Activated CD4-positive, alpha-beta T cell treated with anti-CD3 and anti-CD28 coated beads for 36 hours (primary cell): ENCODE measurements at regions of chr17 and their contacts with region 1.

Region 1: DNA sequence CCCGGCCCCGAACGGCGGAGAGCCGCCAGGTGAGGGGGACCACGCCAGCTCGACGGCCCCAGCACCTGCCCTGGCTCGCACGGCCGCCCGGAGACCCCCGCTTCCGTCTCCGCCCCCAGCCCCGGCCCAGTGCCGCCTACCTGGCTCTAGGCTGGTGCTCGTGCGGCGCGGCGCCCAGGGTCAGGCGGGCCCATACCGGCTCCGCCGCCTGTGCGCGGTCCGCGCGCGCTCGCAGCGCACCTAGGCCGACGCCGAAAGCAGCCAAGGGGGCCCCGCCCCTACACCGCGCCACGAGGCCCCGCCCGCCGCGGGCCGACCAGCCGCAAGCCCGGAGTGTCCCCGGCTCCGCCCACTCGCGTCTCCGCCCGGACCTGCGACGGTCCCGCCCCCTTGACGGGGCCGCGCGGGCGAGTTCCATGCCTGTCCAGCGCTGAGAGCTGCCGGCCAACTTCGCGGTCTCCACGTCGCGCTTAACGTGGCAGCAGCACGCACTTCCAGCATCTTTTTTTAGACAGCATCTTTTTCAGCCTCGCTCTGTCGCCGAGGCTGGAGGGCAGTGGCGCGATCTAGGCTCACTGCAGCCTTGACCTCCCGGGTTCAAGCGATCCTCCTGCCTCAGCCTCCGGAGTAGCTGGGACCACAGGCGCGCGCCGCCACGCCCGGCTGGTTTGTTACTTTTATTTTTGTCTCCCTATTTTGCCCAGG is at the start of gene SLC25A39:
- DNase-seq: peak; percentile 97
- ATAC-seq: peak; percentile 74
- H3K4me3 Mint-ChIP-seq: peak within 1 kb of the TSS; percentile 84
- H3K27ac Mint-ChIP-seq: peak within 1 kb of the TSS; percentile 94
- H3K4me1 Mint-ChIP-seq: peaks cover 21% of the 10 kb centered on the region
- H3K27me3 Mint-ChIP-seq: no peaks in the 10 kb centered on the region
- total RNA-seq, gene SLC25A39: 127 to 129 TPM

Region 2: DNA sequence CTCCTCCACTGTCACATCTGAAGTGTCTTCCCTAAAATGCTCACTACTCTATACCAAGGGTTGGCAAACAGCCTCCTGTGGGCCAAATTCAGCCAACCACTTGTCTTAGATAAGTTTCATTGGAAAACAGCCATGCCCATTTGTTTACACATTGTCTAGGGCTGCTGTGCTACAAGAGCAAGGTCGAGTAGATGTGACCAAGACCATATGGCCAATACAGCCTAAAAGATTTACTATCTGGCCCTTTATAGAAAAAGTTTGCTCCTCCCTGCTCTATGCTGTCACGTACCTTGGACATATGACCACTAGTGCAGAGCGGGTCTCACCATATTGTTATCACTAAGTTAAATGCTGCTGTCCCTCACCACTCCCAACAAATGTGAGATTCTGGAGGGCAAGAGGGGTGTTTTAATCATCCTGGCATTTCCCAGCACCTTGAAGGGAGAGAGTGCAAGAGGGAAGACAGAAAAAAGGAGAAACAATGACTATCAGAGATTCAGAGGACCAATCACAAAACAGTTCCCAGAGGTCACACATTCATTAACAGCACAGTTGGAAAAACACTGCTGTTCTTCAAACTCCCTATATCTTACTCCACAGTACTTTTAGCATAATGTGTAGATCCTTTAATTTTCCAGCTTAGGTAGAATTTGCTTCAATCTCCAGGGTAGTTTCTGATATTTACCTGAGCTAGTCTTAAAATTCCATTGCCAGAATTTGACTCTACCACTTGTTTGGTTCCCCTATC is 271.4 kb before region 1 on chr17:
- CTCF ChIA-PET with region 1: no interaction called
- POLR2A ChIA-PET with region 1: no interaction called
- intact Hi-C with region 1: no loop called
- DNase-seq: no peak
- ATAC-seq: no peak
- H3K4me3 Mint-ChIP-seq: no peak overlapping the region
- H3K27ac Mint-ChIP-seq: peak overlapping the region; percentile 26
- H3K4me1 Mint-ChIP-seq: peaks cover 8% of the 10 kb centered on the region
- H3K27me3 Mint-ChIP-seq: no peaks in the 10 kb centered on the region

Region 3: DNA sequence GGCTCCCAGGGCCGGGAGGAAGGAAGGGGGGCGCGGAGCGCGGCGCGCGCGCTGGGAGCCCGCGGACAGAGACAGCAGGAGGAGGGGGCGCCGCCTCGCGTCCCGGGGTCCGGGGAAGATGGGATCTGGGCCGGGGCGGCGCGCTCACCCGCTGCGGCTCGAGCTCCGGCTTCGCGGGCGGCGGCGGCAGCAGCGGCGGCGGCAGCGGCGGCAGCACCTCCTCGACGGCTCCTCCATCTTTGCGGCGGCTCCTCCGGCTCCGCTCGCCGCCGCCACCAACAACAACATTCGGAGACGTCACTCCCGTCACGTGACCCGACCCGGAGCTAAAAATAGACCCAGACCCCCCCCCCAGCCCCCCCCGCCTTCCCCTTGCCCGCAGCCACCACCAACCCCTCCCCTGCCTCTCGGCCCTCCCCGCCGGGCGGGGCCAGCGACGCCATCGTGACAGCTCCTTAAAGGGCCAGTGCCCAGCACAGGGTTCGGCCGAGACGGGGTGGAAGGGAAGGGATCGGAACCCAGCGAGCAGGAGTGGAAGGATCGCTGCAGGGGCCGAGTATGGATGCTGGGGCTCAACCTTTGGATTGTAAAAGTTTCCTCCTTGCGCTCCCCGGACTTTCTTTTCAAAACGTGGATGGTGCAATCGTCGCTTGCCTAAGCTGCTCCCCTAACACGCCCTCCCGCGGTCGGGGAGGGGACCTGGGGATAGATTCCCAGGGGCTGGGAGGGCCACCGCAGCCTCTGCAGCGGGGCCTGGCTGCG is 201.2 kb before region 1 on chr17 and contains the start of gene HDAC5:
- CTCF ChIA-PET with region 1: interaction called, 6 read pairs
- POLR2A ChIA-PET with region 1: no interaction called
- intact Hi-C with region 1: loop called (anchors 1 to 5 kb)
- DNase-seq: peak; percentile 98
- ATAC-seq: peak; percentile 97
- H3K4me3 Mint-ChIP-seq: peak within 1 kb of the TSS; percentile 87
- H3K27ac Mint-ChIP-seq: peak within 1 kb of the TSS; percentile 97
- H3K4me1 Mint-ChIP-seq: peaks cover 22% of the 10 kb centered on the region
- H3K27me3 Mint-ChIP-seq: no peaks in the 10 kb centered on the region
- total RNA-seq, gene HDAC5: 16.5 to 22.0 TPM

Region 4: GRCh38 chr17:44199553-44200477 is 124.9 kb before region 1 on chr17 and contains the start of gene ATXN7L3:
- CTCF ChIA-PET with region 1: interaction called, 9 read pairs
- POLR2A ChIA-PET with region 1: no interaction called
- intact Hi-C with region 1: loop called (anchors 1 to 5 kb)
- DNase-seq: peak; percentile 100
- ATAC-seq: peak; percentile 84
- H3K4me3 Mint-ChIP-seq: peak within 1 kb of the TSS; percentile 88
- H3K27ac Mint-ChIP-seq: peak within 1 kb of the TSS; percentile 94
- H3K4me1 Mint-ChIP-seq: peaks cover 38% of the 10 kb centered on the region
- H3K27me3 Mint-ChIP-seq: no peaks in the 10 kb centered on the region
- total RNA-seq, gene ATXN7L3: 66.3 to 70.6 TPM

Region 5: GRCh38 chr17:44308320-44308818 is 16.4 kb before region 1 on chr17 and contains the start of gene RUNDC3A:
- CTCF ChIA-PET with region 1: interaction called, 3 read pairs
- POLR2A ChIA-PET with region 1: no interaction called
- intact Hi-C with region 1: loop called in 1 of 2 experiments (anchors 1 kb)
- DNase-seq: peak; percentile 91
- ATAC-seq: peak; percentile 91
- H3K4me3 Mint-ChIP-seq: no peak within 1 kb of the TSS
- H3K27ac Mint-ChIP-seq: no peak within 1 kb of the TSS
- H3K4me1 Mint-ChIP-seq: peaks cover 5% of the 10 kb centered on the region
- H3K27me3 Mint-ChIP-seq: peaks cover 28% of the 10 kb centered on the region
- total RNA-seq, gene RUNDC3A: 0.11 TPM in 1 of 2 experiments, not detected in the other